Activated CD4-positive, alpha-beta T cell treated with anti-CD3 and anti-CD28 coated beads for 36 hours (primary cell): ENCODE measurements at regions of chr10 and their contacts with region 1.

Region 1: DNA sequence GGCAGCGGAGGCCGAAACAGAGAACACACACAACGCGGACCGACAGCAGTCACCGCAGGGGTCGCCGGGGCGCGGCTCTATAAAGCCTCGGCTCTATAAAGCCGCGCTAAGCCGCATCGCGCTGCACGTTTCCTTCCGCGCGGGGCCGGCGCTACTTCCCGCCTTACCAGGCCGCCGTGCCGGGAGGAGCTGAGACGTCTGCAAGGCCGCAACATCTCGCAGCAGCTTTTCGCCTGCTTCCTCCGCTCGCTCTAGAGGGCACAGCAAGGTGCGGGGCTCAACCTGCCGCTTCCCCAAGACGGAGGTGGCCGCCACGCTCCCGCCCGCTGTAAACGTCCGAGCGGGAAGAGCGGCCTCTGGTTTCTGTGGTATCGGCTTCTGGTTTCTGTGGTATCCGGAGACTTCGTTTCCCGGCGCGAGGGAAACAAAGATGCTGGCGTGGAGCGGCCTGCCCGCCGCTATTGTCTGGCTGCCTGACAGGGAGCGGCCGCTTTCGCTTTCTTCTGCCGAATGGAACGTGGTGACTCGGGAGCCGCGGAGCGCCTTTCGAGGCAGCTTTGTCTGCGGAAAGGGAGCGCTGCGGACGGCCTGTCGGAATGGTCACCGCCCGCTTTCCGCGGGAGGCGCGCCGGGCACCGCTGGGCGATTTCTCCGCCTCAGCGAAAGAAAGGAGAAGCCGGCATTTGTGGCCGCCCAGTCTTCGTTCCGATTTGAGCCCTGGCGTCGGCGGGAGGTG is 91.8 kb downstream of the SPAG6 start:
- DNase-seq: peak; percentile 92
- ATAC-seq: peak; percentile 83
- H3K4me3 Mint-ChIP-seq: peak overlapping the region; percentile 90
- H3K27ac Mint-ChIP-seq: peak overlapping the region; percentile 95
- H3K4me1 Mint-ChIP-seq: peaks cover 53% of the 10 kb centered on the region
- H3K27me3 Mint-ChIP-seq: no peaks in the 10 kb centered on the region

Region 2: GRCh38 chr10:21495752-21496342 is 941.2 kb before region 1 on chr10:
- CTCF ChIA-PET with region 1: no interaction called
- POLR2A ChIA-PET with region 1: no interaction called
- intact Hi-C with region 1: loop called in 1 of 2 experiments (anchors 2 kb)
- DNase-seq: peak; percentile 92
- ATAC-seq: peak; percentile 86
- H3K4me3 Mint-ChIP-seq: peak overlapping the region; percentile 76
- H3K27ac Mint-ChIP-seq: no peak overlapping the region
- H3K4me1 Mint-ChIP-seq: peaks cover 17% of the 10 kb centered on the region
- H3K27me3 Mint-ChIP-seq: peaks cover 47% of the 10 kb centered on the region

Region 3: DNA sequence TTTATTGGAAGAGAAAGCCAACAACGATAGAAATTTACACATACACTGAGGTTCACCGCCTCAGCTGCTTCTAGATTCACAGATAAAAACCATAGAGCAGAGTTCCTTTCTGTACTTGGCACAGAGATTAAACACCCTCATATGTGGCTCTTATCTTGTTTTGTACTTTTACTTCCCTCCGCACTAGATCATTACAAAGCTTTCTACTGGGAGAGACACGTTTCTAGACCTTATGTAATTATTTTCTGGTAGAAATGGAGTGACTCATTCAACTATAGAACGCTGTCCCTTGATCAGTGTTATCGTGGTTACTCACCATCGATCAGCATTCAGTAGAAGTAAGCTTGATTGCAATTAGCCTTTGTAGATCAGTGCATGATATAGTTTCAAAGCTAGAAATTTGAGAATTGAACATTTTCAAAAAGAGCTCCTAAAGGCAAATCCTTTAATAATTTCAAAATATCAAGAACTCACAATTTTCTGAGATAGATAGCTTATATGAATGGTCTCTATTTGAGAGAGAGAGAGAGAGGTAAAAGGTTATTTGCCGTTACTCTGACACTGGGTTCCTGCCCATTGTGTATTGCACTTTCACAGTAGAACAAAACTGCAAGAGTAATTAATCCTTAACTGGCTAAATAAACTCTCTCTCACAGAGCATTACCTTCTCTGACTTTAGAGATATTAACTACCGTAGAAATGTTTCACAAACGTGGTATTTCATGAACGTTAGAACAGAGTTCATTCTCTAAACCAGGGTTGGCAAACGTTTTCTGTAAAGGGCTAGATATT is 407.4 kb before region 1 on chr10:
- CTCF ChIA-PET with region 1: no interaction called
- POLR2A ChIA-PET with region 1: no interaction called
- intact Hi-C with region 1: no loop called
- DNase-seq: no peak
- ATAC-seq: peak; percentile 70
- H3K4me3 Mint-ChIP-seq: no peak overlapping the region
- H3K27ac Mint-ChIP-seq: no peak overlapping the region
- H3K4me1 Mint-ChIP-seq: peaks cover 13% of the 10 kb centered on the region
- H3K27me3 Mint-ChIP-seq: no peaks in the 10 kb centered on the region

Region 4: GRCh38 chr10:22158426-22158825 is 278.6 kb before region 1 on chr10:
- CTCF ChIA-PET with region 1: no interaction called
- POLR2A ChIA-PET with region 1: no interaction called
- intact Hi-C with region 1: no loop called
- DNase-seq: no peak
- ATAC-seq: no peak
- H3K4me3 Mint-ChIP-seq: no peak overlapping the region
- H3K27ac Mint-ChIP-seq: no peak overlapping the region
- H3K4me1 Mint-ChIP-seq: peaks cover 13% of the 10 kb centered on the region
- H3K27me3 Mint-ChIP-seq: no peaks in the 10 kb centered on the region

Region 5: GRCh38 chr10:22228943-22229801 is 207.9 kb before region 1 on chr10:
- CTCF ChIA-PET with region 1: interaction called, 4 read pairs
- POLR2A ChIA-PET with region 1: no interaction called
- intact Hi-C with region 1: loop called in 1 of 2 experiments (anchors 1 kb)
- DNase-seq: peak; percentile 92
- ATAC-seq: peak; percentile 75
- H3K4me3 Mint-ChIP-seq: peak overlapping the region; percentile 89
- H3K27ac Mint-ChIP-seq: peak overlapping the region; percentile 90
- H3K4me1 Mint-ChIP-seq: peaks cover 20% of the 10 kb centered on the region
- H3K27me3 Mint-ChIP-seq: no peaks in the 10 kb centered on the region

Region 6: GRCh38 chr10:22316285-22317120 is 120.5 kb before region 1 on chr10 and contains the start of gene COMMD3:
- CTCF ChIA-PET with region 1: interaction called, 3 read pairs
- POLR2A ChIA-PET with region 1: interaction called, 3 read pairs
- intact Hi-C with region 1: loop called (anchors 2 to 5 kb)
- DNase-seq: peak; percentile 88
- ATAC-seq: peak; percentile 72
- H3K4me3 Mint-ChIP-seq: peak within 1 kb of the TSS; percentile 94
- H3K27ac Mint-ChIP-seq: peak within 1 kb of the TSS; percentile 97
- H3K4me1 Mint-ChIP-seq: peaks cover 38% of the 10 kb centered on the region
- H3K27me3 Mint-ChIP-seq: peaks cover 7% of the 10 kb centered on the region
- total RNA-seq, gene COMMD3: 53.8 to 77.1 TPM

Region 7: GRCh38 chr10:22379059-22379458 is 58.0 kb before region 1 on chr10:
- CTCF ChIA-PET with region 1: no interaction called
- POLR2A ChIA-PET with region 1: no interaction called
- intact Hi-C with region 1: loop called in 1 of 2 experiments (anchors 1 kb)
- DNase-seq: peak; percentile 81
- ATAC-seq: peak; percentile 98
- H3K4me3 Mint-ChIP-seq: no peak overlapping the region
- H3K27ac Mint-ChIP-seq: peak overlapping the region; percentile 75
- H3K4me1 Mint-ChIP-seq: peaks cover 14% of the 10 kb centered on the region
- H3K27me3 Mint-ChIP-seq: peaks cover 2% of the 10 kb centered on the region

Region 8: DNA sequence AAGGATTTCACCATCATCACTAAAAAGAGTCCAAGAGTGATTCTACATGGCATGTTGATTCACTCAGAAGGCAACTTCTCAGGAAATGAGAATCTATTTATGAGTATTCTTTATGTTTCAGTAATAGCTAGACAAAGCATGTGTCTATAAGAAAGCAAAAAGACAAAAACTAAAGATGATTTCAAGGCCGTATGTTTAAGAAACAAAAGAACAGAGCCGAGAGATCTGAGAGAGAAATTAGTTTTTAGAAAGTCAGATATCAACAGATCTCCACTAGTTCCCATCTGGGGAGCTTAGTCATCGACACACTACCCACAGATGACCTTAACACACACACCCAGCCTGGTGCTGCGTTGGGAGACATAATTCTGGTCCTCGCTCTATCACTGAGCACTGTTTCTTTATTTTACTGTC is 256.3 kb after region 1 on chr10:
- CTCF ChIA-PET with region 1: no interaction called
- POLR2A ChIA-PET with region 1: no interaction called
- intact Hi-C with region 1: loop called (anchors 10 kb)
- DNase-seq: peak; percentile 51
- ATAC-seq: peak; percentile 87
- H3K4me3 Mint-ChIP-seq: peak overlapping the region; percentile 46
- H3K27ac Mint-ChIP-seq: peak overlapping the region; percentile 97
- H3K4me1 Mint-ChIP-seq: peaks cover 91% of the 10 kb centered on the region
- H3K27me3 Mint-ChIP-seq: no peaks in the 10 kb centered on the region

Region 9: DNA sequence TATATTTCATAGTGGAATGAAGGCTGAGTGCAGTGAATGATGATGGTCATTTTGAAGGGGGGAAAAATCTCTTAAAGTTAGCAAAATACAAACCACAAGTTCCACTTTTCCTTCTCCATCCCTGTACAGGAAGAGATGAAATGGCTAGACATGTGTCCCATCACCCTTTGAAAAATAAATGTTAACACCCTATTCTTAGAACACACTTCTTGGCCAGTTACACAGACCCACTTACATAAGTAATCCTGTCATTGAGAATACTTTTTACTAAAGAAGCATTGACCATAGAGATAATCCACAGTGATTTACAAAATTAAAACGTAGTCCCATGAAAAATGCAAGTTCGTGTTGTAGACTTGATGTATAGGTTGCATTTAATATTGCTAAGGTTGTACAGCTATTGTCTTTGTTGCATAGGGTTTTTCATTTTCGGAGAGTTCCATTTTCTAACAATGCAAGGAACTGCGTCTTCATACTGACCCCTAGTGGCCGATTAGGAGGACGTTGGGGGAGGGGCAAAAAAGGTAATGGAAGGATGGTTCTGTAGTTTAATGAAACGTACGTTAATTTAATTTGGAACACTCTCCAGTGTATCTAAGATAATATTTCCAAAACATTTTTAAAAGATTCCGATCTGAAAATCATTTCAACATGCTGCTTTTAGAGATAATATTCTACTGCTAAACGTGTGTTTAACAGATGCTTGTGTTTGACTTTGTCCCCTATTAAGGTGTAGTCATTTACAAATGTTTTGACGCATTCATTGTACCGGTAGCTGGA is 551.7 kb after region 1 on chr10:
- CTCF ChIA-PET with region 1: interaction called, 5 read pairs
- POLR2A ChIA-PET with region 1: no interaction called
- intact Hi-C with region 1: loop called (anchors 2 to 5 kb)
- DNase-seq: peak; percentile 73
- ATAC-seq: peak; percentile 68
- H3K4me3 Mint-ChIP-seq: no peak overlapping the region
- H3K27ac Mint-ChIP-seq: no peak overlapping the region
- H3K4me1 Mint-ChIP-seq: peaks cover 15% of the 10 kb centered on the region
- H3K27me3 Mint-ChIP-seq: peaks cover 5% of the 10 kb centered on the region